Body of pancreas (tissue), 4 donors: ENCODE measurements at regions of chr5 and their contacts with region 1.

Region 1: DNA sequence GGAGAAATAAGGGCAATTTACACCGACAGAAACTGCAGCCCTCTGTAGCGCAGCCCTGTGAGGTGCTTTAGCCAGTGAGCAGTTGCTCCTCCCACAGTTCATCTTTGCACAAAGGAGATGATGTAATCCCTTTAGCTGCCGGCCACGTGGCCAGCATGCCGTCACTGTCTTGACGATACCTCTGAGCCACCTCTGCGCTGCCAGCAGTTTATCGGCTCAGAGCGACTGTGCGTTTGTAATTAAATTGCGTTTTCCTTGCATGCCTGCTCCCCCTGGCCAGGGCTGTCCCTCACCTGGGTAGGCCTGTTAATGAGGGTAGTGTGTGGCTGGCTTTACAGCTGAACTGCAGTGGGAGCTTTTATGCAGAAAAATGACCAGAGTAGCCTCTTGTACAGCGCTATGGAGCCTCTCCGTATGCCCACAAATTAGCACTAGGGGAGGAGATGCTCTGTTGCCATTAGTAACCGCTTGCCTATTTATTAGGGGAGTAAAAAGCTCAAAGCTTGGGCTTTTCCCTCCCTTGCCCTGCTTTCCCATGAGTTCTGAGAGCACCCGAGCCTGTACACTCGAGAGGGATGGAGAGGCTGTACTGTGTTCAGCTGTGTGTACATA is 107.0 kb downstream of the TRIO start:
- DNase-seq: peak; percentile 34 to 62 (median 54)
- ATAC-seq: peak; percentile 86
- H3K4me3 ChIP-seq: no peak overlapping the region
- H3K27ac ChIP-seq: peak overlapping the region in 1 of 4 donors; percentile 20
- H3K4me1 ChIP-seq: peaks cover 8% of the 10 kb centered on the region
- H3K27me3 ChIP-seq: no peaks in the 10 kb centered on the region
- CTCF ChIP-seq: no peak
- POLR2A ChIP-seq: no peak

Region 2: DNA sequence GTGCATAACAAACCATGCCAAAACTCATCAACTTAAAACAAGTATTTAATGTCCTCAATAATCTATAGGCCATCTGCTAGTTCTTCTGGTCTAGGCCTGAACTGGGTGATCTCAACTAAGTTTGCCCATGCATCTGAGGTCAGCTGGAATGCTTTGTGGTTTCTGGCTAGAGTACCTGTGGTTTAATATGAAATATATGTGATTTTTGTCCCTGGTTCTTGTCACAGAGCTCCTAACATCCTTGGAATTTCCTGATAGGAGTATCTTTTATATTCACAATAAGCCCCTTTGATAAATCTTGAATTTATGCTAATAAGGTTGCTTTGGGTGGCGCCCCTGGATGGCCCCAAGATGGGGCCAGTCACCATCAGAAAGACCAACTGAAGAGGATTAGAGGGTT is 841.6 kb before region 1 on chr5:
- intact Hi-C with region 1: no loop called
- DNase-seq: no peak
- ATAC-seq: no peak
- H3K4me3 ChIP-seq: no peak overlapping the region
- H3K27ac ChIP-seq: no peak overlapping the region
- H3K4me1 ChIP-seq: no peaks in the 10 kb centered on the region
- H3K27me3 ChIP-seq: no peaks in the 10 kb centered on the region
- CTCF ChIP-seq: no peak
- POLR2A ChIP-seq: no peak

Region 3: GRCh38 chr5:14118527-14119320 is 131.5 kb before region 1 on chr5:
- intact Hi-C with region 1: no loop called
- DNase-seq: peak in 2 of 4 donors; percentile 22 to 29
- ATAC-seq: no peak
- H3K4me3 ChIP-seq: no peak overlapping the region
- H3K27ac ChIP-seq: no peak overlapping the region
- H3K4me1 ChIP-seq: peaks cover 16% of the 10 kb centered on the region
- H3K27me3 ChIP-seq: no peaks in the 10 kb centered on the region
- CTCF ChIP-seq: no peak
- POLR2A ChIP-seq: no peak

Region 4: GRCh38 chr5:14131855-14132503 is 118.2 kb before region 1 on chr5:
- intact Hi-C with region 1: loop called (anchors 10 kb)
- DNase-seq: no peak
- ATAC-seq: no peak
- H3K4me3 ChIP-seq: no peak overlapping the region
- H3K27ac ChIP-seq: no peak overlapping the region
- H3K4me1 ChIP-seq: peaks cover 10% of the 10 kb centered on the region
- H3K27me3 ChIP-seq: no peaks in the 10 kb centered on the region
- CTCF ChIP-seq: no peak
- POLR2A ChIP-seq: no peak